PC-3 (cell line): ENCODE measurements at regions of chr6 and their contacts with region 1.

Region 1: GRCh38 chr6:73854998-73855718 is 159.2 kb downstream of the CD109 start:
- DNase-seq: peak; percentile 76
- ATAC-seq: no peak
- H3K4me3 ChIP-seq: no peak overlapping the region
- H3K27ac ChIP-seq: no peak overlapping the region
- H3K4me1 ChIP-seq: no peaks in the 10 kb centered on the region
- H3K27me3 ChIP-seq: no peaks in the 10 kb centered on the region
- CTCF ChIP-seq: peak; percentile 77

Region 2: GRCh38 chr6:73739096-73739495 is 116.1 kb before region 1 on chr6:
- CTCF ChIA-PET with region 1: no interaction called
- POLR2A ChIA-PET with region 1: no interaction called
- intact Hi-C with region 1: loop called (anchors 1 kb)
- DNase-seq: peak; percentile 69
- ATAC-seq: peak; percentile 60
- H3K4me3 ChIP-seq: no peak overlapping the region
- H3K27ac ChIP-seq: no peak overlapping the region
- H3K4me1 ChIP-seq: 0 out of 2 replicates have a peak, but pooled peaks cover 6% of the 10 kb centered on the region
- H3K27me3 ChIP-seq: no peaks in the 10 kb centered on the region
- CTCF ChIP-seq: peak; percentile 74

Region 3: GRCh38 chr6:73964241-73964854 is 109.2 kb after region 1 on chr6:
- CTCF ChIA-PET with region 1: no interaction called
- POLR2A ChIA-PET with region 1: no interaction called
- intact Hi-C with region 1: loop called (anchors 5 kb)
- DNase-seq: peak; percentile 13
- ATAC-seq: peak; percentile 55
- H3K4me3 ChIP-seq: no peak overlapping the region
- H3K27ac ChIP-seq: no peak overlapping the region; the same call in 1 of the 2 replicates
- H3K4me1 ChIP-seq: peaks cover 15% of the 10 kb centered on the region
- H3K27me3 ChIP-seq: no peaks in the 10 kb centered on the region
- CTCF ChIP-seq: no peak

Region 4: DNA sequence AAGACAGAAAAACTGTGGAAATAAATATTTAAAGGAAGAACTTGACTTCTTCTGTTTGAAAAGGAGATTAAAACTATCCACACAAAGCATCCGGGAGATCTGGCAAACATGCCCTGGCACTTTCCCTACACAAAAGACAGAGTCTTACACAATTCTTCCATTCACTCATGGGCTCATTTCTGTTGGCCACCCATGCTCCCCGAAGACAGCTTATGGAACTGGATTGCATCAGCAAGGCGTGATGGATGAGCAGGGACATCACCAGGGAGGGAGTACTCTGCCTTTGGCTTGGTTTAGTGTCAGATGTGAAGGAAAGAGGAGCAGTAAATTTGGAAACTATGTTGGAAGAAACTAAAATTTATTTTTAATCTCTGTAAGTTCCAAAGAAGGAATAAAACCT is 220.2 kb after region 1 on chr6:
- CTCF ChIA-PET with region 1: no interaction called
- POLR2A ChIA-PET with region 1: no interaction called
- intact Hi-C with region 1: loop called (anchors 10 kb)
- DNase-seq: no peak
- ATAC-seq: no peak
- H3K4me3 ChIP-seq: no peak overlapping the region
- H3K27ac ChIP-seq: no peak overlapping the region
- H3K4me1 ChIP-seq: peaks cover 23% of the 10 kb centered on the region
- H3K27me3 ChIP-seq: no peaks in the 10 kb centered on the region
- CTCF ChIP-seq: no peak